ENCODE measurements at regions of chr4 and their contacts with region 1.

Region 1: DNA sequence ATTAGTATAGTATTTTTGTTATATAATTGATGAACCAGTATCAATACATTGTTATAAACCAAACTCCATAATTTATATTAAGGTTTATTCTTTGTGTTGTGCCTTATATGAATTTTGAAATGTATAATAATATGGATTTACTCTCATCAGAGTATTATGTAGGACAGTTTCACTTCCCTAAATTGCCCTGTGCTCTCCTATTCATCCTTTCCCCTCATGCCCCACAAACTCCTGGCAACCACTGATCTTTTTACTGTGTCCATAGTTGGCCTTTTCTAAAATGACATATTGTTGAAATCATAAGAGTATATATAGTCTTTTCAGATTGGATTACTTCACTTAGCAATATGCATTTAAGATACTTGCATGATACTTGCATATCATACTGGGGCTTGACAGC is 958.1 kb upstream of the GRID2 start:
- DNase-seq: no peak
- H3K4me3 ChIP-seq: no peak overlapping the region
- H3K27ac ChIP-seq: no peak overlapping the region
- H3K4me1 ChIP-seq: no peaks in the 10 kb centered on the region
- H3K27me3 ChIP-seq: no peaks in the 10 kb centered on the region
- CTCF ChIP-seq: no peak
- EP300 ChIP-seq: no peak
- POLR2A ChIP-seq: no peak

Region 2: GRCh38 chr4:91319556-91320268 is 25.9 kb before region 1 on chr4:
- intact Hi-C with region 1: loop called in 1 of 4 experiments (anchors 1 kb)
- DNase-seq: no peak
- H3K4me3 ChIP-seq: no peak overlapping the region
- H3K27ac ChIP-seq: no peak overlapping the region
- H3K4me1 ChIP-seq: no peaks in the 10 kb centered on the region
- H3K27me3 ChIP-seq: no peaks in the 10 kb centered on the region
- CTCF ChIP-seq: no peak
- EP300 ChIP-seq: no peak
- POLR2A ChIP-seq: no peak